ENCODE measurements at regions of chr6 and their contacts with region 1.

Region 1: GRCh38 chr6:27772261-27773001 is 139.8 kb downstream of the OR2B2 start:
- DNase-seq: peak in 1 of 2 experiments; percentile 94
- H3K4me3 ChIP-seq: peak overlapping the region; percentile 15 to 59 (median 48); a peak in 7 of 8 replicates
- H3K27ac ChIP-seq: no peak overlapping the region
- H3K4me1 ChIP-seq: peaks cover 6 to 13% (median 12%) of the 10 kb centered on the region in 4 experiments; a peak in 6 of 7 replicates
- H3K27me3 ChIP-seq: peaks cover 31 to 64% (median 59%) of the 10 kb centered on the region in 4 experiments
- CTCF ChIP-seq: peak; percentile 85 to 87 (median 86)
- EP300 ChIP-seq: peak in 1 of 2 experiments; percentile 49; a peak in 1 of 3 replicates
- POLR2A ChIP-seq: no peak
- RAD21 ChIP-seq: peak; percentile 52 to 71

Region 2: DNA sequence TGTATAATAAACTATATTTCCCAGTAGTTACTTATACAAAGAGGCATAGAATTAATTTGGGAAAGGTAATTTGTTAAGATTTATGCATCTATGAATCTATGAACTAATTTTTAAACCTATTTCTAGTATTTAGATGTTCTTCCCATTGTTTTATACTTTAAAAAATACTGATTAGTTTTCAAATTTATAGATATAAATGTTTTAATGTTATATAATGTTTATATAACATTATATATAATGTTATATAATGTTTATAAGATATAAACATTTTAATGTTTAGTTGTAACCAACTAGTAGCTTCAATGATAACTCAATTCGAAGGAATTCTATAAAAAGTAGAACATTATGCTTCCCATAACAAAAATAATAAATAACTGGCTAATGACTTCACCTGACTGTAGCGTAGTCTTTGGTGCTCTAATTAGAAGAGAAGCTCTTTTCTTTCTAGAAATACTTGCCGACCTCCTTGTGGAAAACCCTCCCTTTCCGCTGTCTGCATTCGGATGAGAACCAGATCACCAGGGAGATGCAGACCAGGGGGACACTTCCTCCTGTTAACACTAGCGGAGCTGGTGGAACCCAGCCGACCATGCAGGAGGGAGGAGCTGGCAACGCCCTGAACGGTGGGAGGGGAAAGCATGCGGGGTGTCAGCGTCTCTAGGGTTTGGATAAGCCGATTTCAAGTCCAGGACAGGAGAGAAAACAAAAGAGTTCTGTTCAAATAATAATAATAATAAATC is 18.6 kb before region 1 on chr6:
- CTCF ChIA-PET with region 1: interaction called, 102 read pairs
- POLR2A ChIA-PET with region 1: interaction called, 5 read pairs
- DNase-seq: peak; percentile 59 to 71
- H3K4me3 ChIP-seq: peak overlapping the region; percentile 84 to 100 (median 91); a peak in 7 of 8 replicates
- H3K27ac ChIP-seq: no peak overlapping the region
- H3K4me1 ChIP-seq: peaks cover 0 to 13% (median 1%) of the 10 kb centered on the region in 4 experiments; a peak in 4 of 7 replicates
- H3K27me3 ChIP-seq: peaks cover 0 to 29% (median 12%) of the 10 kb centered on the region in 4 experiments; a peak in 6 of 7 replicates
- CTCF ChIP-seq: peak in 2 of 3 experiments; percentile 26 to 31; a peak in 2 of 4 replicates
- EP300 ChIP-seq: no peak
- POLR2A ChIP-seq: no peak
- RAD21 ChIP-seq: no peak; a peak in 1 of 4 replicates

Region 3: GRCh38 chr6:27761391-27761790 is 11.0 kb before region 1 on chr6:
- CTCF ChIA-PET with region 1: interaction called, 102 read pairs
- POLR2A ChIA-PET with region 1: interaction called, 11 read pairs
- DNase-seq: no peak
- H3K4me3 ChIP-seq: peak overlapping the region in 3 of 4 experiments; percentile 16 to 74 (median 40); a peak in 5 of 8 replicates
- H3K27ac ChIP-seq: no peak overlapping the region
- H3K4me1 ChIP-seq: peaks cover 0 to 13% (median 2%) of the 10 kb centered on the region in 4 experiments; a peak in 5 of 7 replicates
- H3K27me3 ChIP-seq: peaks cover 16 to 51% (median 34%) of the 10 kb centered on the region in 4 experiments
- CTCF ChIP-seq: no peak
- EP300 ChIP-seq: no peak
- POLR2A ChIP-seq: no peak
- RAD21 ChIP-seq: no peak

Region 4: DNA sequence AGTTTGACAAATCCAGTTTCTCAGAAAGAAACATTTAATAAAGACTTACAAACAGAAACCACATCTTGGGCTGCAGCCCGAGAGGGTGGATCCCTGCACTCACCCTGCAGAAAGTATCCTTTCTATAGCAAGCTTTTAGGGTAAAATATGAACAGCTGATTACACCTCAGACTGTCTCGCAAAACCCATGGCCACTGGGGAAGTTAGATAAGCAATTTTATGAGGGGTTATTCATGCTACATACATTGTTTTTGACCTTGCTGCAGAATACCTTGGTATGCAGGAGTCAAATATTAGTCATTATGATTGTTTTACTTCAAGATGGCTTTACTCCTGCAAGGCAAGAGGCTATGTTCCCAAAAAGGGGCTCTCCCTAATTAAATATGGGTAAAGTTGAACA is 12.9 kb after region 1 on chr6:
- CTCF ChIA-PET with region 1: interaction called, 36 read pairs
- POLR2A ChIA-PET with region 1: interaction called, 3 read pairs
- DNase-seq: no peak
- H3K4me3 ChIP-seq: no peak overlapping the region
- H3K27ac ChIP-seq: no peak overlapping the region
- H3K4me1 ChIP-seq: no peaks in the 10 kb centered on the region
- H3K27me3 ChIP-seq: no peaks in the 10 kb centered on the region
- CTCF ChIP-seq: no peak
- EP300 ChIP-seq: no peak
- POLR2A ChIP-seq: no peak
- RAD21 ChIP-seq: no peak

Region 5: DNA sequence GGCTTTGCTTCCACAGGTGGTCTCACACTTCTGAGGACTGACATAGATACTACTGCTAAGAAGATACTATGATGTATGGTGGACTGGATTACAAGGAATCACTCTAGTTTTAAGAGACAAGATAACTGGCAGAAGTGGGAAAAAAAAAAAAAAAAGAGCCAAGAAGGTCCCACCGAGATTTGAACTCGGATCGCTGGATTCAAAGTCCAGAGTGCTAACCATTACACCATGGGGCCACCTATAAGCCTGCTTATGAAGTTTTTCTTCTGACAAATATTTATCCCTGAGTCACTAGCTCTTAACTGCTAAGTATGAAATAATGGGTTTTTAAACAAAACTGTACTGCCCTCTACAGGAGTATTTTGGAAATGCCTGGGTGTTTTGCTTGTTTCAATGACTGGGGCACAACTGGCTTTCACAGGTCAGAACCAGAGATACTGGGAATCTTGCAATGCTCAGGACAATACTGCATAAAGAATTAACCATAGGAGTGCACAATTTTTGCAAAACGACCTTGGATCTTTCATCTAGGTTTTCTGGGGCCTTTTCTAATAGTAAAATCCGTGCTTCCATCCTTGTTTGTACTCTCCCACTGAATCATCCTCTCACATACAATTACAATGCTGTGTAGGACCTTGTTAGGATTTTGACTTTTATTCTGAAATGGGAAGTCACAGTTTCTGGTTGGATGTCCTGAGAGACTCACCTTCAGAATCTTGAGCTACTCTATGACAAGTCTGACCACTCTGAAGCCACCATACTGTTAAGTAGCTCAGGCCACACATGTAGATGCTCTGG is 23.5 kb after region 1 on chr6:
- CTCF ChIA-PET with region 1: interaction called, 26 read pairs
- POLR2A ChIA-PET with region 1: interaction called, 3 read pairs
- DNase-seq: peak in 1 of 2 experiments; percentile 75
- H3K4me3 ChIP-seq: peak overlapping the region in 1 of 4 experiments; percentile 37; a peak in 2 of 8 replicates
- H3K27ac ChIP-seq: no peak overlapping the region
- H3K4me1 ChIP-seq: peaks cover 0 to 5% (median 1%) of the 10 kb centered on the region in 4 experiments; a peak in 2 of 7 replicates
- H3K27me3 ChIP-seq: no peaks in the 10 kb centered on the region; a peak in 1 of 7 replicates
- CTCF ChIP-seq: peak in 2 of 3 experiments; percentile 44 to 71; a peak in 3 of 4 replicates
- EP300 ChIP-seq: no peak
- POLR2A ChIP-seq: no peak
- RAD21 ChIP-seq: peak; percentile 66 to 72

Region 6: GRCh38 chr6:27908017-27908416 is 135.6 kb after region 1 on chr6:
- CTCF ChIA-PET with region 1: no interaction called
- POLR2A ChIA-PET with region 1: no interaction called
- DNase-seq: no peak
- H3K4me3 ChIP-seq: no peak overlapping the region
- H3K27ac ChIP-seq: no peak overlapping the region
- H3K4me1 ChIP-seq: no peaks in the 10 kb centered on the region
- H3K27me3 ChIP-seq: no peaks in the 10 kb centered on the region
- CTCF ChIP-seq: no peak
- EP300 ChIP-seq: no peak
- POLR2A ChIP-seq: no peak
- RAD21 ChIP-seq: no peak

Measured in H1 (cell line).